A549 (cell line): ENCODE measurements at regions of chr1 and their contacts with region 1.

Region 1: GRCh38 chr1:205321164-205321958 is at the start of gene NUAK2:
- DNase-seq: peak; percentile 92 to 95
- ATAC-seq: peak; percentile 70 to 85
- H3K4me3 ChIP-seq: peak within 1 kb of the TSS; percentile 95
- H3K27ac ChIP-seq: peak within 1 kb of the TSS; percentile 96 to 99
- H3K4me1 ChIP-seq: peaks cover 41% of the 10 kb centered on the region
- CTCF ChIP-seq: no peak; the same call in 2 of the 3 replicates
- EP300 ChIP-seq: no peak
- POLR2A ChIP-seq: peak; percentile 99
- RAD21 ChIP-seq: peak; percentile 6 to 9; a peak in 2 of 5 replicates
- polyA plus RNA-seq, gene NUAK2: 22.6 and 29.7 TPM in 2 replicates

Region 2: GRCh38 chr1:204323887-204324286 is 997.5 kb before region 1 on chr1:
- CTCF ChIA-PET with region 1: no interaction called
- POLR2A ChIA-PET with region 1: no interaction called
- DNase-seq: peak; percentile 44 to 45
- ATAC-seq: peak; percentile 31 to 41; a peak in 2 of 6 replicates
- H3K4me3 ChIP-seq: no peak overlapping the region
- H3K27ac ChIP-seq: peak overlapping the region; percentile 46 to 66; a peak in 5 of 6 replicates
- H3K4me1 ChIP-seq: peaks cover 53% of the 10 kb centered on the region
- CTCF ChIP-seq: no peak
- EP300 ChIP-seq: no peak
- POLR2A ChIP-seq: no peak
- RAD21 ChIP-seq: no peak

Region 3: GRCh38 chr1:205227584-205228006 is 93.8 kb before region 1 on chr1 and contains the start of gene TMCC2:
- CTCF ChIA-PET with region 1: interaction called, 37 read pairs
- POLR2A ChIA-PET with region 1: no interaction called
- DNase-seq: peak; percentile 84 to 97
- ATAC-seq: peak; percentile 83 to 92
- H3K4me3 ChIP-seq: peak within 1 kb of the TSS; percentile 69
- H3K27ac ChIP-seq: peak within 1 kb of the TSS; percentile 64 to 88
- H3K4me1 ChIP-seq: peaks cover 12% of the 10 kb centered on the region; the same call in 2 of the 3 replicates
- CTCF ChIP-seq: no peak
- EP300 ChIP-seq: no peak
- POLR2A ChIP-seq: peak; percentile 51
- RAD21 ChIP-seq: no peak; a peak in 1 of 5 replicates
- polyA plus RNA-seq, gene TMCC2: 1.6 and 1.7 TPM in 2 replicates

Region 4: DNA sequence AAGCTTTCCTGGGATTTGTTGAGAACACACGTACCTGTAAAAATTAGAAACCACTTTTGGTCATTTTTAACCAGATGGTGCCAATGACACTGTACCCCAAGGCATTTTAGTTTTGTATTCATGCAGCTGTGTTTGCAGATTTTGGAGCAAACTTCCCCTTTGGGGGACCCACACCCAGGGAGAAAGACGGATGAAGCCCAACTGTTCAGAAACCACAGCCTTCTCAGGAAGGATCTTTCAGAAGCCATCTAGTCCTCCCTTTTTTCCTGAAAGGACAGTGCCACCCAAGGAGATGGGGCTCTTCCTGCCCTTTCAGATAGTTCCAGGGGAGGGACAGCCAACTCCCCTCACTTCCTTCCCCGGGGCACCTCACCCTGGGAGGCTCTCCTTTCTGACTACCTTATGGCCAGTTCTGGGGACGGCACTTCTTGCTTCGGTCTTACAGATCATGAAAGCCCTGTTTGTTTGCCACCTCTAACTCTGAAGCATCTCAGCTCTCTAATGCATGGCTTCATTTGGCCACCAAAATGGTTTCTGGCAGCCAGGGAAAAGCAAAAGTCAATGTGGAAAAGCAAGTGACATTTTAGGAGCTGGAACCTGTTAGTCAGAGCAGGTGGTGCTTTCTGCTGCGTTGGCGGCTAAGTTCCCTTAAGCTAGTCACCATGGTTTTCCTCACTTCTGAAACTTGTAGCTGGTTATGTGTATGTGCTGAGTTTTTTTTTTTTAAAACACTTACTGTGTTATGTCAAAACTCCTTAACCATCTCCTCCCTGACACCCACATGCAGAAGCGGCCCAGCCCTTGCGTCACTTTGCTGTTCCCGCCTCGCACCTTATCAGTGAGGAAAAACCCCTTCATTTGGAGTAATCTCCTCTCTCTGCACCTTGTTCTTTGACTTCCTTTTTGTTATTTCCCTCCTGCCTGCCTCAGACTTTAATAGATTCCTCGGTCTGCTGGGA is 83.6 kb before region 1 on chr1:
- CTCF ChIA-PET with region 1: interaction called, 11 read pairs
- POLR2A ChIA-PET with region 1: no interaction called
- DNase-seq: no peak
- ATAC-seq: no peak
- H3K4me3 ChIP-seq: no peak overlapping the region
- H3K27ac ChIP-seq: no peak overlapping the region
- H3K4me1 ChIP-seq: no peaks in the 10 kb centered on the region
- CTCF ChIP-seq: no peak
- EP300 ChIP-seq: no peak
- POLR2A ChIP-seq: no peak
- RAD21 ChIP-seq: no peak

Region 5: DNA sequence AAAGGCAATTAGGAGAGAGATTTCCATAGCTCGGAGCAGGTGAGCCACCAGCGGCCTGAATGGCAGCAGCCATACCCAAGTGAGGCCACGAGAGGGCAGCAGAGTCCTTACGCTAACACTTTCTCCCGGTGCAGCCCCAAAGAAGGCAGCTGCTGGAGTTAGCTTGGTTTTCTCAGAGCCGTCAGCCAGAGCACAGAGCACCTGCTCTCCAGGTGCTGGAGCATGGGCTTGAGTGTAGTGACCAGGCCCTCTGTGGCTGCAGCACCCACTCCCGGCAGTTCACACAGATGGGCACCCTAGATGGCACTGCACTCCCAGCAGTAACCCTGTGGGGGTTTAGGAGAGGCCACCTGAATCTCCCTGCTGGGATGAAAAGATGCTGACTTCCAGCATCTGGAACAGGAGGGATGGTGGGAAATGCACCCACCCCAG is 47.8 kb before region 1 on chr1:
- CTCF ChIA-PET with region 1: interaction called, 3,627 read pairs
- POLR2A ChIA-PET with region 1: interaction called, 25 read pairs
- DNase-seq: peak; percentile 87 to 96
- ATAC-seq: peak; percentile 77 to 86
- H3K4me3 ChIP-seq: no peak overlapping the region
- H3K27ac ChIP-seq: peak overlapping the region; percentile 83 to 93
- H3K4me1 ChIP-seq: peaks cover 67% of the 10 kb centered on the region
- CTCF ChIP-seq: peak; percentile 98
- EP300 ChIP-seq: no peak
- POLR2A ChIP-seq: no peak
- RAD21 ChIP-seq: peak; percentile 99 to 100

Region 6: GRCh38 chr1:205294175-205294913 is 27.0 kb before region 1 on chr1:
- CTCF ChIA-PET with region 1: interaction called, 3,627 read pairs
- POLR2A ChIA-PET with region 1: interaction called, 19 read pairs
- DNase-seq: peak; percentile 73 to 95
- ATAC-seq: peak; percentile 45 to 57
- H3K4me3 ChIP-seq: no peak overlapping the region
- H3K27ac ChIP-seq: peak overlapping the region; percentile 98 to 99
- H3K4me1 ChIP-seq: peaks cover 79% of the 10 kb centered on the region
- CTCF ChIP-seq: no peak
- EP300 ChIP-seq: peak; percentile 79 to 92; a peak in 4 of 5 replicates
- POLR2A ChIP-seq: no peak
- RAD21 ChIP-seq: peak; percentile 33 to 44

Region 7: DNA sequence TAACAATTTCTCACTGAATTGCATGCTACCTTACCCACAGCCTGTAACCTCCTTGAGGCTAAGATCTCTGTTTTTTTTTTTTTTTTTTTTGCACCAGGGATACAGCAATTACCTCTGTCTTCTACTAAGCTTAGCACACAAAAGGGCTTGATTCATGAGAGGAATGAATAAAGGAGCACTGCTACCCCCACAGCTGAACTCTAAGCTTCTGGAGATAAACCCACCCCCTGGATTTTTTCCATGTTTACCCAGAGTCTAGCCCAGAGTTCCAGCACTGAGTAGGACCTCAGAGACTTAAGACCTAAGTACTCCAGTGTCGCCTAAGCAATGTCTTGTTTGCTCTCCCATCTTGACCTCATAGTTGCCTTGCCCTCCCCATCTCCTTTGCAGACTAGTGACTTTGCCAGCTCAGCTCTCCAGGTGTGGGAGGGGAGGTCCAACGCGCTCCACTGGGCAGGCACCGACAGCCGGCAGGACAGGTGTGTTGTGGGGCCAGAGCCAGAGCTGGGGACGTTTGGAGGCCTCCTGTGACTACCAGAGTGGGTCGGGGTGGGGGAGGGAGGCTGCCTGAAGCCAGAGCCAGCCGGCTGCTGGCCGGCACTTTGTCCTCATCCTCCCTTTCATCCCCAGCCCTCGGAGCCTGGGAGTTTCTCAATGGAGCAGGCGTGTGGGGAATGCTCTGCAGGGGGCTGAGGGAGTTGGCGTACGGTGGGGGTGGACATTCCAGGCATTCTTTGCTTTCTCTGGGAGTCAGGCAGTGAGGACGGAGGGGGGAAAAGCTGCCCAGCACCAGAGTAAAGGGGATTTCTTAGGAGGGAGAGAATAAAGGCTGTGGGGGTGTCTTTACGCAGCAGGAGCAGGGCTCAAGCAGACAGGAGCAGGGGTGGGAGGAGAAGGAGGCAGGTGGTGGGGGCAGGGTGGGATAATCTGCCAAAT is 20.2 kb before region 1 on chr1:
- CTCF ChIA-PET with region 1: interaction called, 3,627 read pairs
- POLR2A ChIA-PET with region 1: interaction called, 14 read pairs
- DNase-seq: peak in 1 of 2 experiments; percentile 96
- ATAC-seq: peak; percentile 53 to 54
- H3K4me3 ChIP-seq: peak overlapping the region; percentile 8; the same call in 1 of the 3 replicates
- H3K27ac ChIP-seq: peak overlapping the region; percentile 98 to 99
- H3K4me1 ChIP-seq: peaks cover 94% of the 10 kb centered on the region
- CTCF ChIP-seq: no peak
- EP300 ChIP-seq: peak; percentile 95 to 99; a peak in 4 of 5 replicates
- POLR2A ChIP-seq: no peak
- RAD21 ChIP-seq: peak; percentile 32 to 62